Astrocyte of the cerebellum (primary cell): ENCODE measurements at regions of chr3 and their contacts with region 1.

Region 1: DNA sequence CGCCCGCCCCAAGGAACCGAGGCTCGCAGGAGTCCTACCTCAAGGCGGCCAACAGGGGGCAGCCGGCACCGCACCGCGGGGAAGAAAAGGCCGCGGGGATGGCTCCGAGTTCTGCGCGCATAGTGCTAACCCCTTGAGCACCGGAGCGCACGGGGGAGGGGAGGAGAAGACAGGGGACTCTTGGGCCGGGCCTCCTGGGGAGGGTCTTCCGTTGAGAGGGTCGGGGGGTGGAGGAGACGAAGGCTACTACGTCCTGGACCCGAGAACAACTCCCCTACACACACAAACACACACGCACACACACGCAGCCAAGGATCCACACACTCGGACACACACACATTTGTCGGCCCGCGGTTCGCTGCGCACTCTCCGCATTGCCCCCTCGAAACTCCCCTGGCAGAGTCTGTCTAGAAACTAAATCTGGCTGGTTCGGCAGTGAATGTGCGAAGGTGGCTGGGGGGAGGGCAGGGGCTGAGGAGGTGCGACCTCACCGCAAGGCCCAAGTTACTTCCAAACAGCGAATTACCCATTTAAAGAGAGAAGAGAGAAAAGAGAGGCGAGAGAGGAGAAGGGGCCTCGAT is 1.8 kb downstream of the WNT5A start:
- DNase-seq: peak; percentile 82
- H3K4me3 ChIP-seq: peak overlapping the region; percentile 83
- CTCF ChIP-seq: peak; percentile 63

Region 2: GRCh38 chr3:54427941-54428871 is 1057.1 kb before region 1 on chr3:
- in situ Hi-C with region 1: loop called (anchors 25 kb)
- DNase-seq: peak; percentile 88
- H3K4me3 ChIP-seq: no peak overlapping the region
- CTCF ChIP-seq: peak; percentile 89

Region 3: DNA sequence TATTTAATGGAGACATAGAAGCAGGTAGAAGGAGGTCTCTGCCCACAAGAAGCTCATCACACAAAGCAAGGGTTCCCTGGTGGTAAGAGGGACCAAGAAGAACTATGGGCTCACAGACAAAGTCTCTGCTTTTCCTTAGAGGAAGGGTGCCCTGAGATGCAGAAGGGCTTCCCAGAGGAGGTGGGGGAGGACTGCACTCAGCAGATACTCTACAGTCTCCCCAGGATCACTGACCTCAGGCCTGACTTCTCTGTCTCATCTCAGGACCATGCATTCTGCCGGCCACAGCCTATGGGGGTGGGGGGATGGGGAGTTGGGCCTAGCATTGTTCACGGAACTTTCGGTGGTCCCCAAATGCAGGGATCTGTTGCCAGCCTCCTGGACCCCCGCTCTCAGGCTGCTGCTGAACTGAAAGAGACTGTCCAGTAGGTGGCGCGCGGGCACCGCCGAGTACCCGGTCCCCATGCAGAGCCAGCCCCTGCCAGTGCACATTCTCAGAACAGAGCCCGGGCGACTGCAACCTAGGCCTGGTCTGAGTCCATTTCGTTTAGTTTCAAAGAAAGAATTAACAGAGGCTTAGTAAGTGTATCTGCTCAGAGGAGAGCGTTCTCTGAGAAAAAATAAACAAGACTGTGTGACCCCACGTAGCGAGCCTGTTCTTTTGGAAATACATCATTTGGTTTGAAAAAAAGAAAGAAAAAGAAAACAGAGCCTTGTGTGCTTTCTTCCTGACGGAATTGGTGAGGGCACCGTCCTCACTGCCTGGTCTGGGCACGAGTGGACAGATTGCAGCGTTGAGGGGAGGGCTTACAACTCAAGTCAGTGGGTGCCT is 631.5 kb before region 1 on chr3:
- in situ Hi-C with region 1: loop called (anchors 25 kb)
- DNase-seq: peak; percentile 56
- H3K4me3 ChIP-seq: no peak overlapping the region
- CTCF ChIP-seq: peak; percentile 78

Region 4: GRCh38 chr3:54951405-54951804 is 533.9 kb before region 1 on chr3:
- in situ Hi-C with region 1: loop called (anchors 25 kb)
- DNase-seq: peak; percentile 93
- H3K4me3 ChIP-seq: no peak overlapping the region
- CTCF ChIP-seq: peak; percentile 77

Region 5: DNA sequence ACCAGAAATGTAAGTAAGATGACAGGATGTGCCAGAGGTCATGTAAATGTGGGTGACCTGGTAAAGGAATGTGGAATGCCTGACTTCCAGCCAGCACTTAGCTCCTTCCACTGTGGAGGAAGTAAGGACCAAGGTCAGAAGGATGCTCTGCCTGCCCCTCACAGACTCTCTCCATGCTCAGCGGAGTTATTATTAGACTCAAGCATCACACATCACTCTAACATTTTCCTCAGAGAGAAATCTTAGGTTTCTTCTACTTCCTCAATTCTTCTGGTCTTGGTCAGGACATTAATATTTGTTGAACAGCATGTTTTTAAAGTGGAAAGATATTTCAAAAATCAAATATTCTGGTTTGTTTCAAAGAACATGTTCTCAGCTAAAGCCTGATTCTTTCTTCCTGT is 233.2 kb after region 1 on chr3:
- in situ Hi-C with region 1: loop called (anchors 5 kb)
- DNase-seq: no peak
- H3K4me3 ChIP-seq: no peak overlapping the region
- CTCF ChIP-seq: no peak

Region 6: DNA sequence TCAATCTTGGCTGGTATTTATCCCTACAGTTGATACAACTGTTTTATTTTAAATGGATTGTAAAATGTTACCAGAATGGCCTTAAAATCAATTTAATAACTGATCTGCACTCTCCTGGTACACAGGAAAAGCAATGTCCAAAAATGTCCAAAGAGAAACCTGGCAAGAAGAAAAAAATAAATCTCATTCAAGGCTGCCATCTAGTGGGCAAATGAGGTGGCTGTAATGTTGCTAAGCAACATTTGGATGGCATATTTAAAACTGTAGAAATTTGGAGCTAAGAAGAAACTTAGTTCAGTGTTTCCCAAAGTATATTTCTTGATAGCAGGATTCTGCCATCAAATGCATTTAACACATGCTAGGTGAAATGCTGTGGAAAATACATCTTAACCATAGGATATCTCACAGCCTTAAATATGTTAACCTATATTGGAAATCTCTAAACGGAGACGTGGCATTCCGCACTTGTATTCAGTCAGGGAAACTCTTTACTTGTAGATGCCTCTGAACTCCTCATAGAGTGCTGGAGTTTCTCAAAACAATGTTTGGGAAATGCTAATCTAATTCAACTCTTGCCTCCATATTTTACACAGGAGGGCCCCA is 766.1 kb after region 1 on chr3:
- in situ Hi-C with region 1: loop called (anchors 25 kb)
- DNase-seq: peak; percentile 43
- H3K4me3 ChIP-seq: no peak overlapping the region
- CTCF ChIP-seq: peak; percentile 72